A549 (cell line): ENCODE measurements at regions of chr22 and their contacts with region 1.

Region 1: DNA sequence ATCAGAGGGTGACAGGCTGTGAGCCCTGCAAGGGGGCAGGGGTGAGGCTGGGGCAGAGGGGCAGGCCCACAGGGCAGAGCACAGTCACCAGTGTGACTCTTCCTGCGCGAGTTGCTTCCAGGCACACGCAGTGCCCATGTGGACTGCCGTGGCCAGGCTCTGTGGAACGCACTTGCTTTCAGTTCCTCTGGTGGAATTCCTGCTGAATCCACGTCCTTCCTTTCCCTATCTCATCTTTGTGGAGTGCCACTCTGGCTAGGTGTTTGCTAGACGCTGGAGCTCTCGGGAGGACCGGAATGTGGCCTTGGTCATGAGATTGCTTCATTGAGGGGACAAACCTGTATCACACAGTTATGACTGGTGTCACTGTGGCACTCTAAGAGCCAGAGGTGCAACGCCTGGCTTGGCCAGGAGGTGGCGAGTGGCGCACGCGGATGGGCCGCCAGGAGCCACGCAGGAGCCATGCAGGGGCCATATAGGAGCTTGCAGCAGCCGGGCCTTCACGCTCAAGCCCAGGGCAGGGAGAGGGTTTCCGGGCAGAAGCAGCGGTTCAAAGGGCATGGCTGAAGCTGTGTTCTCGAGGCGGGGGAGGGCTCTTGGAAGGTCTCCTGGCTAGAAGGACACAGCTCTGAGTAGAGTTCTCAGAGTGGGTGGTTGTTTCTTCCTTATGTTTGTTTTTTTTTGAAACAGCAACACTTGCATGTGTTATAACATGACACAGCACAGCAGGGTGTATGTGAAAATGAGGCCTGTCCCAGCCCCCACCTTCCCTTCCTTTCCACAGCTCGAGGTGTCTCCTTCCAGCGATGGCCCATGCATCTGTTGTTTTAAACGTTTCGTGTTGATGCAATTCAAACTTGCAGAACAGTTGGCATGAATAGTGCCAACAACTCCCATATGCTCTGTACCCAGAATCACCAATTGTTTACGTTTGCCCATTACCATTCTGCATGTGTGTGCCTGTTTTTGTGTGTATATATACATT is 36.2 kb downstream of the TBC1D22A start:
- DNase-seq: peak; percentile 66
- ATAC-seq: peak; percentile 86 to 94
- H3K4me3 ChIP-seq: no peak overlapping the region
- H3K27ac ChIP-seq: peak overlapping the region in 1 of 2 experiments; percentile 77; a peak in 3 of 6 replicates
- H3K4me1 ChIP-seq: peaks cover 6% of the 10 kb centered on the region; the same call in 2 of the 3 replicates
- CTCF ChIP-seq: peak; percentile 62
- EP300 ChIP-seq: no peak
- POLR2A ChIP-seq: no peak
- RAD21 ChIP-seq: peak; percentile 81 to 85

Region 2: GRCh38 chr22:46613606-46614021 is 185.0 kb before region 1 on chr22:
- CTCF ChIA-PET with region 1: no interaction called
- POLR2A ChIA-PET with region 1: no interaction called
- DNase-seq: no peak
- ATAC-seq: no peak
- H3K4me3 ChIP-seq: no peak overlapping the region
- H3K27ac ChIP-seq: no peak overlapping the region
- H3K4me1 ChIP-seq: peaks cover 13% of the 10 kb centered on the region
- CTCF ChIP-seq: no peak
- EP300 ChIP-seq: no peak
- POLR2A ChIP-seq: no peak
- RAD21 ChIP-seq: no peak

Region 3: GRCh38 chr22:46737976-46738646 is 60.5 kb before region 1 on chr22 and contains the start of gene CERK:
- CTCF ChIA-PET with region 1: interaction called, 11 read pairs
- POLR2A ChIA-PET with region 1: no interaction called
- DNase-seq: peak; percentile 31 to 41
- ATAC-seq: peak; percentile 62 to 68
- H3K4me3 ChIP-seq: peak within 1 kb of the TSS; percentile 96
- H3K27ac ChIP-seq: peak within 1 kb of the TSS; percentile 94 to 99
- H3K4me1 ChIP-seq: peaks cover 32% of the 10 kb centered on the region
- CTCF ChIP-seq: no peak
- EP300 ChIP-seq: no peak
- POLR2A ChIP-seq: peak; percentile 25; the same call in 1 of the 2 replicates
- RAD21 ChIP-seq: no peak
- polyA plus RNA-seq, gene CERK: 13.1 and 17.7 TPM in 2 replicates

Region 4: GRCh38 chr22:46762238-46763050 is 36.2 kb before region 1 on chr22 and contains the start of gene TBC1D22A:
- CTCF ChIA-PET with region 1: interaction called, 13 read pairs
- POLR2A ChIA-PET with region 1: interaction called, 5 read pairs
- DNase-seq: peak; percentile 89 to 93
- ATAC-seq: peak; percentile 95 to 96
- H3K4me3 ChIP-seq: peak within 1 kb of the TSS; percentile 98
- H3K27ac ChIP-seq: peak within 1 kb of the TSS; percentile 97 to 99
- H3K4me1 ChIP-seq: peaks cover 23% of the 10 kb centered on the region
- CTCF ChIP-seq: no peak
- EP300 ChIP-seq: no peak
- POLR2A ChIP-seq: peak; percentile 95
- RAD21 ChIP-seq: no peak
- polyA plus RNA-seq, gene TBC1D22A: 10.4 and 10.8 TPM in 2 replicates

Region 5: GRCh38 chr22:46774253-46774979 is 24.2 kb before region 1 on chr22:
- CTCF ChIA-PET with region 1: interaction called, 13 read pairs
- POLR2A ChIA-PET with region 1: no interaction called
- DNase-seq: no peak
- ATAC-seq: peak in 1 of 2 experiments; percentile 74; a peak in 2 of 6 replicates
- H3K4me3 ChIP-seq: peak overlapping the region; percentile 30
- H3K27ac ChIP-seq: peak overlapping the region; percentile 90 to 96
- H3K4me1 ChIP-seq: peaks cover 35% of the 10 kb centered on the region
- CTCF ChIP-seq: no peak
- EP300 ChIP-seq: no peak
- POLR2A ChIP-seq: no peak
- RAD21 ChIP-seq: no peak

Region 6: GRCh38 chr22:46783721-46784120 is 14.9 kb before region 1 on chr22:
- CTCF ChIA-PET with region 1: interaction called, 12 read pairs
- POLR2A ChIA-PET with region 1: no interaction called
- DNase-seq: no peak
- ATAC-seq: no peak
- H3K4me3 ChIP-seq: no peak overlapping the region
- H3K27ac ChIP-seq: no peak overlapping the region
- H3K4me1 ChIP-seq: no peaks in the 10 kb centered on the region
- CTCF ChIP-seq: no peak
- EP300 ChIP-seq: no peak
- POLR2A ChIP-seq: no peak
- RAD21 ChIP-seq: no peak

Region 7: GRCh38 chr22:46815896-46816731 is 17.5 kb after region 1 on chr22:
- CTCF ChIA-PET with region 1: interaction called, 23 read pairs
- POLR2A ChIA-PET with region 1: no interaction called
- DNase-seq: no peak
- ATAC-seq: peak; percentile 77 to 85
- H3K4me3 ChIP-seq: no peak overlapping the region
- H3K27ac ChIP-seq: peak overlapping the region; percentile 45 to 82
- H3K4me1 ChIP-seq: peaks cover 35% of the 10 kb centered on the region
- CTCF ChIP-seq: no peak
- EP300 ChIP-seq: no peak
- POLR2A ChIP-seq: no peak
- RAD21 ChIP-seq: peak; percentile 15 to 31; a peak in 2 of 5 replicates

Region 8: DNA sequence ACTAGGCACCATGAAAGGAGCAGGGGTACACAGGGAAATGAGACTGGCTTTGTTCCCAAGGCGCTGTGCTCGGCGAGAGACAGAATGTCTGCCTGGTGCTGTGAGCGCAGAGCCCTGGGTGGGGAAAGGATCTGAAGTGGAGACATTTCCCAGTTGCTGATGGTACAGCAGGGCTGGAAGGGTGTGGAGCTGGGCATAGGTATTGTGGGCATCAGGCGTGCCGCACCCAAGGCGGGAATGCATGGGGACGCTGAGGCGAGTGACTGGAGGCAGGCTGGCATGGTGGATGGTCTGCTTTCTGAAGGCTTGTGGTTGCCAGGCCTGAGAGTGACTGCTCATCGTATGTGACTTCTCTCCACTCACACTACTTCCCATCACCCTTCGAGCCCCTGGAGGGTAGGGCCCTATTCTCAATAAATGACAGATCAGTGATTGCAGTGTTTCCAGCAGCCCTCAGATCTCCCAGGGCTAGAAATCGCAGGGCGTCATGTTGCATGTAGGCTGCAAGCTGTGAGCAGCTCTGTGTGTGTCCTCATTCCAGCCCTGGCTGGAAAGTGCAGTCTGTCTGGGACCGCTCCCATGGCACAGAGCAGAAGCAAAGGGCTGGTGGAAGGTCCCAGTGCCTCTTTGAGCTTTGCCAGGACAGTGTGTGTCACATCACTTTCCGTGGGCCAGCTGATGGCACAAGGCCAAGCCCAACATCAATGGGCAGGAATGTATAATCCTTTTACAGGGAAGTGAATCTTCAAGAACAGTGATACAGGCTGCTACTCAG is 31.5 kb after region 1 on chr22:
- CTCF ChIA-PET with region 1: interaction called, 22 read pairs
- POLR2A ChIA-PET with region 1: no interaction called
- DNase-seq: peak; percentile 43 to 69
- ATAC-seq: peak; percentile 66 to 80
- H3K4me3 ChIP-seq: peak overlapping the region; percentile 31
- H3K27ac ChIP-seq: peak overlapping the region; percentile 96
- H3K4me1 ChIP-seq: peaks cover 50% of the 10 kb centered on the region
- CTCF ChIP-seq: no peak
- EP300 ChIP-seq: no peak
- POLR2A ChIP-seq: no peak
- RAD21 ChIP-seq: no peak